ENCODE measurements at regions of chr10 and their contacts with region 1.

Region 1: DNA sequence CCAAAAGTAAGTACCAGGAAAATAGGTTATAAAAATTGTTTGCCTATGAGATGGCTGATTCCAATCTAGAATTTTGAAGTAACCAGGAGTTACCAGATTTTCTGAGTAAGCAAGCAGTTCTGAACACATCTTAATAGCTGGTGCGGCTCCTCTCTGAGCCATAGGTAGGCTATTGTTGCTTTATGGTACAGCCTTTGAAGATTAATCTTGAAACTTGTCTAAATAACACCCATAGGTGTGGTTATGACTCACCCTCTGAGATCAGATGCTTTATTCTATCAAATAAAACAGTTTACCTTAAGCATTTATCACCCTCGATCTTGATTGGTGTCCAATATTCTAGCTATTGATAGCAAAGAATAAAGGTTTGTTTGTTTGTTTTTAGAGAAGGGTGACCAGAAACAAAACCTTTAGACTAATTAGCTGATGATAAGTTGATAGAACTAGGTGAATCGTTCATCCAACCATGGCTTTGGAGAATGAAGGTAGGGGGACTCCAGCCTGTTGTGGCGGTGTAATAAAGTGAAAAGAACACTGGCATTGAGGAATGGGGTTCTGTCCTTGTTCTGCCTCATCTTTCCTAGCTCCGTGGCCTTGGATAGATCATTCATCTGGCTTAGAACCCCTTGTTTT is 72.2 kb downstream of the VTI1A start:
- DNase-seq: no peak
- H3K4me3 Mint-ChIP-seq: no peak overlapping the region
- H3K27ac Mint-ChIP-seq: no peak overlapping the region
- H3K4me1 Mint-ChIP-seq: peaks cover 18% of the 10 kb centered on the region
- H3K27me3 Mint-ChIP-seq: peaks cover 6% of the 10 kb centered on the region

Region 2: GRCh38 chr10:112532189-112532588 is 12.9 kb after region 1 on chr10:
- intact Hi-C with region 1: loop called (anchors 1 kb)
- DNase-seq: no peak
- H3K4me3 Mint-ChIP-seq: peak overlapping the region; percentile 53
- H3K27ac Mint-ChIP-seq: peak overlapping the region; percentile 11
- H3K4me1 Mint-ChIP-seq: peaks cover 26% of the 10 kb centered on the region
- H3K27me3 Mint-ChIP-seq: peaks cover 8% of the 10 kb centered on the region

Measured in activated T-helper 1 cell treated with anti-CD3 and anti-CD28 coated beads, Interleukin-12 subunit alpha, Interleukin-12 subunit beta, Interleukin-2, Interleukin-4 antibody, amounts not matched to agents 30 ng/mL and 10 ng/mL and 1 ng/mL, durations not matched to agents 14 hours and 24 hours and 36 hours (primary cell).